Breast epithelium (tissue), 4 donors: ENCODE measurements at regions of chr1 and their contacts with region 1.

Region 1: DNA sequence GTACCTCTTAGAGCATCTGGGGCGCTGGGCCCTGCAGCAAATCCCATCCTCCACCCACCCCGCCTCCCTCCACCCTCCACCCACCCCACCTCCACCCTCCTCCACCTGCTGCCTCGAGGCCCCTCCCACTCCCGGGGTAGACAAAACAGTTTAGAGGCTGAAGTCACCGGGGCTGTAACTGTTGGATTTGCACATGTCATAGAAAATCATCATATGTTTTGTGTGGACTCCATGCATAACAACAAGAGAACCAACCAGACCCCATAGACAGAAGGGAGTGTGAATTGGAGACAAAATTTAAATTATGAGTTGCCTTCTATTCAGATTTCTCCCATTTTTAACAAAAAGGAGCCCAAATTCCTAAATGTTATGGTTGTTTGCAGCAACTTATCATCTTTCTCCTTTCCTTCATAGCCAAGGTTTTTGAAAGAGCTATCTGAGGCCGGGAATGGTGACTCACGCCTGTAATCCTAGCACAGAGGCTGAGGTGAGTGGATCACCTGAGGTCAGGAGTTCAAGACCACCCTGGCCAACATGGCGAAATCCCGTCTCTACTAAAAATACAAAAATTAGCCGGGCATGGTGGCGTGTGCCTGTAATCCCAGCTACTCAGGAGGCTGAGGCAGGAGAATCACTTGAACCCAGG is 28.2 kb upstream of the LGALS8 start:
- DNase-seq: no peak
- H3K4me3 ChIP-seq: no peak overlapping the region
- H3K27ac ChIP-seq: no peak overlapping the region
- H3K4me1 ChIP-seq: no peaks in the 10 kb centered on the region
- H3K27me3 ChIP-seq: no peaks in the 10 kb centered on the region
- CTCF ChIP-seq: no peak
- POLR2A ChIP-seq: no peak

Region 2: GRCh38 chr1:236509647-236510401 is 14.2 kb after region 1 on chr1:
- intact Hi-C with region 1: loop called (anchors 1 kb)
- DNase-seq: no peak
- H3K4me3 ChIP-seq: no peak overlapping the region
- H3K27ac ChIP-seq: no peak overlapping the region
- H3K4me1 ChIP-seq: no peaks in the 10 kb centered on the region
- H3K27me3 ChIP-seq: no peaks in the 10 kb centered on the region
- CTCF ChIP-seq: no peak
- POLR2A ChIP-seq: no peak

Region 3: GRCh38 chr1:236997882-236998281 is 502.3 kb after region 1 on chr1:
- intact Hi-C with region 1: no loop called
- DNase-seq: no peak
- H3K4me3 ChIP-seq: no peak overlapping the region
- H3K27ac ChIP-seq: no peak overlapping the region
- H3K4me1 ChIP-seq: no peaks in the 10 kb centered on the region
- H3K27me3 ChIP-seq: no peaks in the 10 kb centered on the region
- CTCF ChIP-seq: no peak
- POLR2A ChIP-seq: no peak